ENCODE measurements at regions of chr13 and their contacts with region 1.

Region 1: GRCh38 chr13:75326173-75327134 is 155.5 kb downstream of the TBC1D4 start:
- DNase-seq: peak; percentile 63
- ATAC-seq: peak; percentile 89
- H3K4me3 Mint-ChIP-seq: peak overlapping the region; percentile 79
- H3K27ac Mint-ChIP-seq: peak overlapping the region; percentile 87
- H3K4me1 Mint-ChIP-seq: peaks cover 34% of the 10 kb centered on the region
- H3K27me3 Mint-ChIP-seq: peaks cover 2% of the 10 kb centered on the region

Region 2: DNA sequence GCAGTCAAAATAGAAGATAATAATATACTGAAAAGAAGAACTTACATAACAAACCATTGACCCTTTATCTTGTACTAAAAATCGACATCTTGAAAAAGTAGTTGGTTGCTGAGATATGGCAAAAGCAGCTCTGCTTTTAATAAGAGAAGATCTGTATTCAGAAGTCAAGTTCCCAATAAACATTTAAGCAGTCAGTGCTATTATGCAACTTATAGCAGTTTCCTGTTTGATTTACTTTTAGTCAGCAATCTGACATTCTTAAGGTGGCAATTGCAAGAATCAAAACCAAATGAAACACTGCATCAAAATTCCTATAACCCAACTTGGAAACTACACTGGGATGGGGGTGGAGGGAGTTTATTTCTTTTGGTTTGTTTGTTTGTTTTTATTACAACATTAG is 10.0 kb before region 1 on chr13:
- CTCF ChIA-PET with region 1: interaction called, 11 read pairs
- DNase-seq: no peak
- ATAC-seq: no peak
- H3K4me3 Mint-ChIP-seq: no peak overlapping the region
- H3K27ac Mint-ChIP-seq: peak overlapping the region; percentile 49
- H3K4me1 Mint-ChIP-seq: peaks cover 51% of the 10 kb centered on the region
- H3K27me3 Mint-ChIP-seq: no peaks in the 10 kb centered on the region

Region 3: GRCh38 chr13:75357576-75358289 is 31.3 kb after region 1 on chr13:
- CTCF ChIA-PET with region 1: interaction called, 22 read pairs
- DNase-seq: peak; percentile 61
- ATAC-seq: peak; percentile 92
- H3K4me3 Mint-ChIP-seq: no peak overlapping the region
- H3K27ac Mint-ChIP-seq: no peak overlapping the region
- H3K4me1 Mint-ChIP-seq: peaks cover 23% of the 10 kb centered on the region
- H3K27me3 Mint-ChIP-seq: no peaks in the 10 kb centered on the region

Region 4: GRCh38 chr13:75365724-75366173 is 39.3 kb after region 1 on chr13:
- CTCF ChIA-PET with region 1: interaction called, 14 read pairs
- DNase-seq: peak; percentile 61
- ATAC-seq: peak; percentile 97
- H3K4me3 Mint-ChIP-seq: peak overlapping the region; percentile 56
- H3K27ac Mint-ChIP-seq: peak overlapping the region; percentile 90
- H3K4me1 Mint-ChIP-seq: peaks cover 29% of the 10 kb centered on the region
- H3K27me3 Mint-ChIP-seq: no peaks in the 10 kb centered on the region

Region 5: GRCh38 chr13:75452564-75452963 is 126.1 kb after region 1 on chr13:
- CTCF ChIA-PET with region 1: no interaction called
- DNase-seq: no peak
- ATAC-seq: no peak
- H3K4me3 Mint-ChIP-seq: no peak overlapping the region
- H3K27ac Mint-ChIP-seq: no peak overlapping the region
- H3K4me1 Mint-ChIP-seq: no peaks in the 10 kb centered on the region
- H3K27me3 Mint-ChIP-seq: peaks cover 11% of the 10 kb centered on the region

Region 6: DNA sequence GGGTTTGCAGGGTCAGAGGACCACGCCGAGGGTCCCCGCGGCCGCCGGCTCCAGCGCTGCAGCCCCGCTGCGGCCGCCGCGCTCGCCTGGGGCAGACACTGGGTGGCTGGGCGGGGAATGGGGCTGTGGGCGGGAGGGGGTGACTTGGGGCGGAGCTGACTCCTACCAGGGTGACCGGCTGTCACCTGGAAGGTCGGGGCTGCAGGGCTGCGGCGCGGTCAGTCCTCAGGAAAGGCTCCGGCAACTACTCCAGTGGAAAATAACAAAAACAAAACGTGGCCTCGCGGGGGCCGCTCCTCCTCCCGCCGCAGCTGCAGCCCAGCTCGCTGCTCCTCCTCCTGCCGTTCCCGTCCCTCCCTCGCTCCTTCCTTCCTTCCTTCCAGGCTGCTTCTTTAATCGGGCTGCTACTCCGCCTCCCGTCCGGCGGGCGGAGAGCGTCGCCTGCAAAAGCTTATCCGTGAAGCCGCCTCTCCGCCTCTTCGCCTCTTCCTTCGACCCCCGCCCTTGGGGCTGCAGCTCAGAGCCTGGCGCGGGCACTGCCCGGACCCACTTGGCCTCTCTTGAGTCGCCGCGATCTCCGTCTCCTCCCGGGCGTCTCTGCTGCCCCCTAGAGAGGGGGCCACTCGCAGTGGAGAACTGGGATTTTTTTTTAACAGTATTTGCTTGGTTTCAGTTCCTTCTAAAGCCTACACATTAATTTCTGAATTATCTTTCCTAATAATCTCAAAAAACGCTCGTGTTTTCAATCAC is 155.8 kb after region 1 on chr13 and contains the start of gene TBC1D4:
- CTCF ChIA-PET with region 1: no interaction called
- DNase-seq: peak; percentile 76
- ATAC-seq: peak; percentile 78
- H3K4me3 Mint-ChIP-seq: peak within 1 kb of the TSS; percentile 96
- H3K27ac Mint-ChIP-seq: peak within 1 kb of the TSS; percentile 50
- H3K4me1 Mint-ChIP-seq: peaks cover 16% of the 10 kb centered on the region
- H3K27me3 Mint-ChIP-seq: peaks cover 77% of the 10 kb centered on the region
- total RNA-seq, gene TBC1D4: 13.9 to 23.6 TPM

Measured in activated CD8-positive, alpha-beta memory T cell treated with anti-CD3 and anti-CD28 coated beads, Interleukin-2, amount 10 ng/mL, durations not matched to agents 7 days and 5 days (primary cell).